ENCODE measurements at regions of chr19 and their contacts with region 1.

Region 1: DNA sequence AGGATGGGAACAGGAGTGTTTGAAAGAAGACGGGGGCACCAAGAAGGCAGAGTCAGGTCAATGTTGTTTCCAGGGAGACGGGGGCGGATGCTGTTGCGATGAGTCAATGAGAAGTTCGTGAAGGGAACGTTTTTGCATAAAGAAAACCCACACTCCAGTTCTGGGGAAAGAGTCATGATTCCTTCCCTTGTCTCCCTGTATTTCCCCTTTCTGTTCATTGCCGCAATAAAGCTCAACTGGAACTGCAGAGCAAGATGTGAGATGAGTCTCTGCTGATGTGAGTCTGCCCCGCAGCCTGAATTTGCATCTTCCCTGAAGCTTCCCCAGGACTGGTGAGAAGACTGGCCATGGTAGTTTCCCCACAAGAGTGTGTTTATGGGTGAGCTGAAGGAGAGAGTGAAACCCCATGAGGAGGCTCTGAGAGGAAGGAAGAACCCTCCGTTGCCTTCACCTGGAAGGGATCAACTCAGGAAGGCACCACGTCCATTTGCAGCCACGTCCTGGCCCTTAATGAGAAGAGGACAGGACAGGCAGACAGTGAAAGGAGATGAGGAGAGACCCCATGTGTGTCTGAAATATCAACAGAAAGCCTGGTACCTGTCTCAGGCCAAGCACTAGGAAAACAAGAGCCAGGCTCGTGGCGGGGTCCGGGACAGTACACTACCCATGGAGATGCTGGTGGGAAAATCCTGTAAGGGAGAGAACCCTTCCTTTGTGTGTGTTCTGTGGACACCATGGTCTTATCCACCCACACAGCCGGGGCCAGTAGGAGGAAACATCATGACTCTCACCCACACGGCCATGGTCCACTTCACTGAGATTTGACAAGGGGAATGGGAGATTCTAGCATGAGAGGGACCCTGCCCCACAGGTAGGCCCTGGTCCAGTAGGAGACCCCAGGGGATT is 13.7 kb downstream of the LILRA1 start:
- H3K4me3 Mint-ChIP-seq: peak overlapping the region; percentile 63
- H3K27ac Mint-ChIP-seq: peak overlapping the region; percentile 83
- H3K4me1 Mint-ChIP-seq: peaks cover 67% of the 10 kb centered on the region
- H3K27me3 Mint-ChIP-seq: peaks cover 7% of the 10 kb centered on the region

Region 2: DNA sequence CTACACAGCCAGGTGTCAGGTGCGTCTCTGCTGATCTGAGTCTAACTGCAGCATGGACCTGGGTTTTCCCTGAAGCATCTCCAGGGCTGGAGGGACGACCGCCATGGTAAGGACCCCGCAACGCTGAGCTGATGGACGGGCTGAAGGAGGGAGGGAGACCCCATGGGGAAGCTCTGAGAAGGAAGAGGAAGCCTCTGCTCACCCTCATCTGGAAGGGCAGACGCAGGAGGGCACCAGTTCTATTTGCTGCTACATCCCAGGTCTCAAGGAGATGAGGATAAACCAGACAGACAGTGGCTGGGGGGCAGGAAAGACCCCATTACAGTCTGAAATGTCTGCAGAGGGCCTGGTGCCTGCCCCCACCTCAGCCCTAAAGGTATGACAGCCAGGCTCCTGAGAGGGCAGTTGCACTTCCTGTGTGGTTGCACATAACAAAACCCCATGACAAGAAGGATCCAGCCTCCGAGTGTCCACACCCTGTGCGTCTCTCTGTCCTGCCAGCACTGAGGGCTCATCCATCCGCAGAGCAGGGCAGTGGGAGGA is 33.7 kb before region 1 on chr19 and contains the start of gene LILRA2:
- intact Hi-C with region 1: loop called (anchors 5 kb)
- H3K4me3 Mint-ChIP-seq: peak within 1 kb of the TSS; percentile 66
- H3K27ac Mint-ChIP-seq: peak within 1 kb of the TSS; percentile 85
- H3K4me1 Mint-ChIP-seq: peaks cover 71% of the 10 kb centered on the region
- H3K27me3 Mint-ChIP-seq: no peaks in the 10 kb centered on the region

Region 3: DNA sequence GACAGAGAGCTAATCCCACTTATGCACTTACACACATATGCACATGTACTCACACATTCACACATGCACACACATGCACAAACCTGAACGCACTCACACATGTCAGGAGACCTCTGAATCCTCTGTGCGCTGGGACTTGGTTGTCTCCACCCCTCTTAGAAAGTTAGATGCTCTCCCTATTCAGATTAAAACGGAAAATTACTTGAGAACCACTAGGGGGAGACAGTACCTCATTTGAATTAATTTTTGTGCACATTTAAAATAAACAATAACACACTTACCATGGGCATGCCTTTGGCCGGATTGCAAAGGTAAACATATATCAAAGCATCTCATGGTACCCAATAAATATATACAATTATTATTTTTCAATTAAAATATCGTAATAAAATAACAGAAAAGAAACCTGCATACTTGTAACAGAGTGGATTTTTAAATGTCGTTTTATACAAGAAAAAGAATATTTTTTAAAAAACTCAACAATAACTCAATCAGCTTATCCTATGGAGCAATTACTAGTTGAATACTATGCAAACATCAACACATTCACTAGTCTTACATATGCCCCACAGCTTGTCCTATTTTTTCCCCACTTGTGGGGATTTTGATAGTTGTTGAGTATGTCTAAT is 46.2 kb after region 1 on chr19:
- intact Hi-C with region 1: no loop called
- H3K4me3 Mint-ChIP-seq: no peak overlapping the region
- H3K27ac Mint-ChIP-seq: no peak overlapping the region
- H3K4me1 Mint-ChIP-seq: peaks cover 55% of the 10 kb centered on the region
- H3K27me3 Mint-ChIP-seq: peaks cover 15% of the 10 kb centered on the region

Region 4: DNA sequence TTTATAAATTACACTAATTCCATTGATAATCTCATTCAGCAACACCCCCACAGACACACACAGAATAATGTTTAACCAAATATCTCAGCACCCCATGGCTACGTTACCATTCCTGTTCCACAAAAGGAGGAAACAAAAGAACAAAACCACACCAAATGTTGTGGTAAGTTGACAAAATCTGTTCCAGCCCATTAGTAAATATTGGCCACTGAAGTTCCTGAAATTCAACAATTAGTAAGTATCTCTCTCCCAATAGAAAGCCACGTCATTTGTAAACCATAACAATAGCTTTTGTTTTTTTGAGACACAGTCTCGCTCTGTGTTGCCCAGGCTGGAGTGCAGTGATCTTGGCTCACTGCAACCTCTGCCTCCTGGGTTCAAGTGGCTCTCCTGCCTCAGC is 264.6 kb after region 1 on chr19:
- intact Hi-C with region 1: no loop called
- H3K4me3 Mint-ChIP-seq: no peak overlapping the region
- H3K27ac Mint-ChIP-seq: no peak overlapping the region
- H3K4me1 Mint-ChIP-seq: peaks cover 36% of the 10 kb centered on the region
- H3K27me3 Mint-ChIP-seq: peaks cover 17% of the 10 kb centered on the region

Region 5: GRCh38 chr19:55653758-55654539 is 1046.8 kb after region 1 on chr19:
- intact Hi-C with region 1: no loop called
- H3K4me3 Mint-ChIP-seq: peak overlapping the region; percentile 90
- H3K27ac Mint-ChIP-seq: peak overlapping the region; percentile 96
- H3K4me1 Mint-ChIP-seq: peaks cover 56% of the 10 kb centered on the region
- H3K27me3 Mint-ChIP-seq: no peaks in the 10 kb centered on the region

Measured in dendritic cell treated with granulocyte-macrophage colony-stimulating factor and Interleukin-4, amounts not matched to agents 40 ng/mL and 50 ng/mL, for 4 days (primary cell).